Esophagus squamous epithelium (tissue), 5 donors: ENCODE measurements at regions of chr6 and their contacts with region 1.

Region 1: DNA sequence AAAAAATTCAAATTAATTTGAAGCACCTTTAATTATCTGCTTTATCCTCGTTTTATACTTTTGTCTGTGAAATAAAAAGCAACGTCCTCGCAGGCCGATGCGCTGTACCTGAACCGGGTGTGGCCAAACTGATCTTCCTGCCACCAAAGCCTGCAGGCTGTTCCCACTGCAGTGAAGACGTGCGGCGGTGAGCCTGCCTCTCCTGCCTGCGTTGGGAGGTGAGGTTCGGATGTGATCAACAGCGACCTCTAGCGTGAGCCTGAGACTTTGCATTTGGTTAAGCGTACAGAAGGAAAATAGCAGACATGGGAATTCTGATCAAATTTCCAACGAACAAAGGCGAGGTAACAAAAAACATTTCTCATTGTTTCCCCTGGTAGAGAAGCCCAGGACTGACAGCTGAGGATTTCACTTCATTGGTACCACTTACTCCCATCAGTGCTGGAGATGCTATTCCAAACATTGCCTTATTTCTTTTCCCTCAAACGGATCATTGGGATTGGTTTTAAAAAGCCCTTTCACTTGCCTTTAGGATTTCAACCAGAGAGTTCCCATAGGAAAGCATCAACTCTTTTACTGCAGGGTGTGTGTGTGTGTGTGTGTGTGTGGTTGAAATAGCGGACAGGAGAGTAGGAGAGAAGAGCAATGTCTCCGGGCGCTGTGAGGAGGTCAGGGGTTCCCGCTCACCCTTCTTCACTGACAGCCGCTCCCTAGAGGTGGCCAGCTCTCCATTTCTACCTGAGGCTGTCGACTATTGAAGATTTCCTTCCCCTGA is 56.6 kb upstream of the CCN6 start:
- DNase-seq: peak; percentile 15
- H3K4me3 ChIP-seq: peak overlapping the region in 1 of 4 donors; percentile 31
- H3K27ac ChIP-seq: peak overlapping the region in 2 of 4 donors; percentile 53 to 55
- H3K4me1 ChIP-seq: peaks cover 0 to 18% (median 6%) of the 10 kb centered on the region in 3 donors
- H3K27me3 ChIP-seq: no peaks in the 10 kb centered on the region
- CTCF ChIP-seq: peak; percentile 74 to 96 (median 94)
- POLR2A ChIP-seq: no peak

Region 2: GRCh38 chr6:111338843-111339242 is 658.4 kb before region 1 on chr6:
- intact Hi-C with region 1: no loop called
- DNase-seq: no peak
- H3K4me3 ChIP-seq: no peak overlapping the region
- H3K27ac ChIP-seq: no peak overlapping the region
- H3K4me1 ChIP-seq: no peaks in the 10 kb centered on the region
- H3K27me3 ChIP-seq: no peaks in the 10 kb centered on the region
- CTCF ChIP-seq: no peak
- POLR2A ChIP-seq: no peak

Region 3: DNA sequence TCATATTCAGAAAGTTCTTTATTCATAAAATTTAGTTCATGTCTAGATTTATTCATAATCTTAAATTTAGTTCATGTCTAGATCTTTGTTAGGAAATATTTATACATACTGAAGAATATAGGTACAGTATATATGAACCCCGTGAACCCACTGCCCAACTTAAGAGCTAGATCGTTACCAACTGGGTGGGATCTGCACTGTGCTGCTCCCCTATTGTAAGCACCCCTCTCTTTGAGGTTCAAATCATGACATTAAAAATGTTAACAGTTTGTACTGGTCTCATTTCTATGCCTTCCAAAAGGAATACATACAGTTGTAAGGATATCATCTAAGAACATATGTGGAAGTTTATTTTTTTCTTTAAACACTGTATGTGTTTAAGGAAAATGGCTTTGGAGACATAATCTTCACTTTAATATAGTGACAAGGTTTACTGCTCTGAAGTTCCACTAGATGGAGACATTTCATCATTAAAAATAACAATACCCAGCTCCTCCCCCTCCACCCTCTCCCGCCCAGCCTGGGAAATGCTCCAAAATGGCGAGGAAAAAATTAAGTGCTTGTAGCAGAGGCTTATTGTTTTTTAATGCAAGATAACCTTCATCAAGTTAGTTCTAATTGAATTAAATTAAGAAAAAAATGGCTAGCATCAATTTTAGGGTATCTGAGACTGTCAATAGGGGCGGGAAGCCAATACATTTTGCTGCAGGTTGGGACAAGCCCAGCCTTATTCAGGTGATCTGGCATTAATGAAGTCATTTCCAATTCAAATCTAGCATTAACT is 287.5 kb before region 1 on chr6:
- intact Hi-C with region 1: loop called (anchors 5 kb)
- DNase-seq: no peak
- H3K4me3 ChIP-seq: peak overlapping the region in 1 of 4 donors; percentile 54
- H3K27ac ChIP-seq: peak overlapping the region in 3 of 4 donors; percentile 8 to 40 (median 26)
- H3K4me1 ChIP-seq: peaks cover 0 to 52% (median 22%) of the 10 kb centered on the region in 3 donors
- H3K27me3 ChIP-seq: peaks cover 0 to 11% (median 0%) of the 10 kb centered on the region in 4 donors
- CTCF ChIP-seq: peak; percentile 68 to 92 (median 82)
- POLR2A ChIP-seq: no peak

Region 4: DNA sequence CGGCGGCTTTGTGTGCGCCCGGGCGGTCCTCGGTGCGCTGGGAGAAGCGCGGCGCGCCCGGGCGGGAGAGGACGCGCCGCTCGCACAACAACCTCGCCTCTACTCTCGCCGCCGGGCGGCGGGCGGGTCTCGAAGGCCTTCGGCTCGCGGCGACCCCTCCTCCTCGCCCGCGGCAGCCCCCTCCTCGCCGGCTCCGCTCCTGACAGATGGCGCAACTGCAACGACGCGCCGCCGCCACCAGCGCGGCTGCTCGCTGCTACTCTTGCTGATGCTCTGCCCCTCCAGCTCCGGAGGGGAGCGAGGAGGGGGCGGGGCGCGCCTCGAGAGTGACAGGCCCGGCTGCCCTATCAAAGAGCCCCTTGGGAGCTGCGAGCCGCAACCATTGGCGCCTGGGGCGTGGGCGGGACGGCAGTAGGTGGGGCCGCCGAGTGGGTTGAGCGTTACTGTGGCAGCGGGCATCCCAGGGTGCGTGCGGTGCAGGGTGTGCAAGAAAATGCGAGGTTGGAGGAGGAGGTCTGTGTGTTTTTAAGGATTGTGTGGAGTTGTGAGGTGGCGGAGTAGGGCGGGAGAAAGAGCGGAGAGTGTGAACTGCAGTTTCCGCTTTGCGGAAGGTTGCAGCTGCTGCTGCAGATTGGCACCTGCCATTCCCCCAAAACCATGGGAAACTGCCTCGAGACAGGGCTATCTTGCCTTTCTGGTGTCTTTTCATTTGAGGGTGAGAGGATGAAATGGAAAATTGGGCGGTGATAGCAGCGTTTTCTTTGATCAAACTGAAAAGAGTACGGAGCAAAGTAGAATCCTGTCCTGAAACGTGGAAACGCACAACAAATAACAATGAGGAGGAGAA is 123.9 kb before region 1 on chr6 and contains the start of gene FYN:
- intact Hi-C with region 1: loop called (anchors 10 kb)
- DNase-seq: peak; percentile 88
- H3K4me3 ChIP-seq: peak within 1 kb of the TSS; percentile 49 to 86 (median 66)
- H3K27ac ChIP-seq: peak within 1 kb of the TSS; percentile 76 to 95 (median 86)
- H3K4me1 ChIP-seq: peaks cover 10 to 44% (median 11%) of the 10 kb centered on the region in 3 donors
- H3K27me3 ChIP-seq: peaks cover 0 to 42% (median 0%) of the 10 kb centered on the region in 4 donors
- CTCF ChIP-seq: peak in 5 of 6 experiments; percentile 36 to 71 (median 49)
- POLR2A ChIP-seq: peak in 3 of 4 donors; percentile 56 to 95 (median 73)
- total RNA-seq, gene FYN: 11.8 to 54.6 (median 21.4) TPM